ENCODE measurements at regions of chr5 and their contacts with region 1.

Region 1: DNA sequence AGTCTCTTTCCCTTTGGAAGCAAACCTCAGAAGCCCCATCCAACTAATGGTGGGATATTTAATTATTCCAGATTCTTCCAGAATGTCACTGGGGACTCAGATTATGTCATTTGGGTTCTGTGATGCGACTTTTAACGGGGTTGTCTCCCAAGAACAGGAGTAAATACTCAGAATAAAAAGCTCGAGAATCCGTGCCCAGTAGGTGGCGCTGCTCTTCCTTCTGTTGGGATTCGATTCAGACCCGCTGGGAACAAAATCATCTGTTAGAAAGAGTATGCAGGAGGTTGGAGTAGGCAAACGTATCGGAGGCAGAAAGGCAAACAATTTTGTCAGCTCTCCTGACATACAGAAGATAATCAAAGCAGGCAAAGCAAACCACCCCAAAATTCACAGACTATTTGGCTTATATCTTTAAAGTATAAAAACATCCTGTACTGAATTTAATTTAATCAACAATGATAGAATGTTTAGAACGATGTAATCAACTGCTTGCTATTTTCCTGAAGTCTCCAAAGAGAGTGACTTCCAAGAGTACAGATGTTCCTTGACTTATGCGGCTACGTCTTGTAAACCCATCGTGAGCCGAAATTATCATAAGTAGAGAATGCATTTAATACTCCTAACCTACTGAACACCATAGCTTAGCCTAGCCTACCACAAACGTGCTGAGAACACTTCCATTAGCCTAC is 169.8 kb upstream of the RAI14 start:
- ATAC-seq: peak; percentile 47 to 81 (median 67)
- H3K4me3 ChIP-seq: no peak overlapping the region
- H3K27ac ChIP-seq: no peak overlapping the region
- H3K4me1 ChIP-seq: peaks cover 4 to 18% of the 10 kb centered on the region in 2 donors

Region 2: DNA sequence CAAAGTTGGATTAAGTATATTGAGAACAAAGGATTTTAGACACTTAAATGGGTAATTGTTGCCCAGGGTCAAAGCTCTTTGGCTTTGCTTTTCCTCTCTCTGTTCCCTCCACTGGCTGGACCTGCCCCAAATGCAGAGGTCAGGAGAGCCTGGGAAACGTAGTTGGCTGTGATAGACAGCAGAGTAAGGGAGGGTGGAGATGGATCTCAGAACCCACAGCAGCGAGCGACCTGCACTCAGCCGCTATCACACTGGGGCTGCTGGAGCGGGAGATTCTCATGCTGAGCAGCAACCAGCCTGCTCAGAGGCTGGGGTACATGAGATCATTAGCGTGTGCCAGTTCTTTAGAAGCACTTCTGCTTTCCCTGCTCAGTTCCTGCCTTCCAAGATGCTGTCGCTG is 280.9 kb after region 1 on chr5:
- in situ Hi-C with region 1: no loop called
- ATAC-seq: no peak
- H3K4me3 ChIP-seq: no peak overlapping the region
- H3K27ac ChIP-seq: no peak overlapping the region
- H3K4me1 ChIP-seq: no peaks in the 10 kb centered on the region

Region 3: DNA sequence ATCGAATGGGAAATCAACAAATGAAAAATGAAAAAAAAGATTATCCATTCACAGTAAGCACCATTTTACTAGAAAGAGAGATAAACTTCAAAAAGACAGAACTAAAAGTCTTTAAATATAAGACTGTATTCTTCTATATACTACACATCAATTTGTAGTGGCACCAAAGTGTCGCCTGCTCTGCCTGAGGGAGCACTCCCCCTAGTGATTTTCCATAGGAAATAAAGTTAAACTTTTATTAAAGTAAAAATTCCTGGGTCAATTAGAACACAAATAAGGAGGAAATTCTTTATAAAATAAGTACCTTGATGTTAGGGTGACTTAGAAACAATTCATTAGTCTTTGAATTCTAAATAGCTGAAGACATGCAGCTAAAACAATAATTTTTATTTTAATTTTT is 419.3 kb after region 1 on chr5:
- in situ Hi-C with region 1: loop called in 3 of 9 experiments (anchors 10 to 25 kb)
- ATAC-seq: peak in 1 of 8 experiments; percentile 16
- H3K4me3 ChIP-seq: no peak overlapping the region
- H3K27ac ChIP-seq: no peak overlapping the region
- H3K4me1 ChIP-seq: no peaks in the 10 kb centered on the region

Region 4: GRCh38 chr5:34915139-34915855 is 429.0 kb after region 1 on chr5 and contains the starts of genes BRIX1 and RAD1:
- in situ Hi-C with region 1: loop called in 2 of 9 experiments (anchors 25 kb)
- ATAC-seq: peak; percentile 96 to 100 (median 99)
- H3K4me3 ChIP-seq: peak within 1 kb of the TSS; percentile 85 to 99 (median 91)
- H3K27ac ChIP-seq: peak within 1 kb of the TSS; percentile 86 to 96
- H3K4me1 ChIP-seq: peaks cover 6 to 19% of the 10 kb centered on the region in 2 donors
- total RNA-seq, gene BRIX1: 28.6 to 57.1 (median 44.1) TPM
- total RNA-seq, gene RAD1: 18.7 to 38.8 (median 26.1) TPM

Measured in motor neuron (in vitro differentiated cells).